Activated naive CD4-positive, alpha-beta T cell treated with anti-CD3 and anti-CD28 coated beads for 36 hours (primary cell): ENCODE measurements at regions of chr3 and their contacts with region 1.

Region 1: GRCh38 chr3:37210230-37210629 is 35.8 kb upstream of the LRRFIP2 start:
- DNase-seq: no peak
- H3K4me3 Mint-ChIP-seq: no peak overlapping the region
- H3K27ac Mint-ChIP-seq: no peak overlapping the region
- H3K4me1 Mint-ChIP-seq: peaks cover 2% of the 10 kb centered on the region
- H3K27me3 Mint-ChIP-seq: no peaks in the 10 kb centered on the region

Region 2: GRCh38 chr3:36904641-36905040 is 305.6 kb before region 1 on chr3:
- CTCF ChIA-PET with region 1: no interaction called
- intact Hi-C with region 1: loop called (anchors 1 kb)
- DNase-seq: no peak
- H3K4me3 Mint-ChIP-seq: no peak overlapping the region
- H3K27ac Mint-ChIP-seq: no peak overlapping the region
- H3K4me1 Mint-ChIP-seq: peaks cover 74% of the 10 kb centered on the region
- H3K27me3 Mint-ChIP-seq: no peaks in the 10 kb centered on the region

Region 3: DNA sequence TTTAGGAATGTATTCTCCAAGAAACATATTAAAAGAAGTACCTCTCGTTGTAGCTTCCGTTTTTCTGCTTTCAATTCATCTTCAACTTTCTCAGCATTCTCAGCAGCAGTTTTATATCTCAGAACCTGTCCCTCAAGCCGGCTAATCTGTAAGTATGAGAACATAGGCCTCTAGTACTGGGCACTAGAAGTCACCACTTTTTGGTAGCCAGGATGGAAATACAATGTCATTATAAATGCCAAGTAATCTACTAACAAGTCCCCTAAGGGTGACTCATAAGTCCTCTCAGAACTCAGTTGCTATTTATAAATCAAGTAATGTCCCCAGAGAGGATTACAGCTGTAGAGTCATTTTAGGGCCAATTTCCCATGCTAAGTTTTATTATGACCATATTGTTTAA is 155.9 kb before region 1 on chr3:
- CTCF ChIA-PET with region 1: interaction called, 5 read pairs
- intact Hi-C with region 1: loop called (anchors 10 kb)
- DNase-seq: no peak
- H3K4me3 Mint-ChIP-seq: no peak overlapping the region
- H3K27ac Mint-ChIP-seq: peak overlapping the region; percentile 66
- H3K4me1 Mint-ChIP-seq: peaks cover 13% of the 10 kb centered on the region
- H3K27me3 Mint-ChIP-seq: no peaks in the 10 kb centered on the region

Region 4: GRCh38 chr3:37174532-37175126 is 35.6 kb before region 1 on chr3 and contains the start of gene LRRFIP2:
- CTCF ChIA-PET with region 1: no interaction called
- intact Hi-C with region 1: loop called (anchors 1 kb)
- DNase-seq: peak; percentile 49
- H3K4me3 Mint-ChIP-seq: peak within 1 kb of the TSS; percentile 82
- H3K27ac Mint-ChIP-seq: peak within 1 kb of the TSS; percentile 50
- H3K4me1 Mint-ChIP-seq: peaks cover 43% of the 10 kb centered on the region
- H3K27me3 Mint-ChIP-seq: no peaks in the 10 kb centered on the region
- total RNA-seq, gene LRRFIP2: 13.3 to 15.3 TPM

Region 5: DNA sequence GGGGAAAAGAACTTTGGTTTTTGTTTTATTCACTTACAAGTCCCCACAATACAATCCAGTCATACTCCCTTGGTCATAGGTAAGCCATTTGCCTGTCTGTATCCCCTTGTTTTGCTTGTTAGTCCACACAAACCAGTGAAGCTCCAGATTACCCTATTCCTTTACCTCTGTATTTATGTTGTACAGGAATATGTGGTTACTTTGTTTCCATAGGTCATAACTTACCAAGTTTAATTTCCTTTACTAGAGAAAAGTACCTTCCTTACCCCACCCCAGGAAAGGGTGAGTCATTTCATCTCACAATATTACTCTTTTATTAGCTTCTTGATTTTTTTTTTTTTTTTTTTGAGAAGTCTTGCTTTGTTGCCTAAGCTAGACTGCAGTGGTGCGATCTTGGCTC is 77.5 kb after region 1 on chr3:
- CTCF ChIA-PET with region 1: no interaction called
- intact Hi-C with region 1: no loop called
- DNase-seq: peak; percentile 5
- H3K4me3 Mint-ChIP-seq: no peak overlapping the region
- H3K27ac Mint-ChIP-seq: peak overlapping the region; percentile 50
- H3K4me1 Mint-ChIP-seq: peaks cover 14% of the 10 kb centered on the region
- H3K27me3 Mint-ChIP-seq: no peaks in the 10 kb centered on the region

Region 6: DNA sequence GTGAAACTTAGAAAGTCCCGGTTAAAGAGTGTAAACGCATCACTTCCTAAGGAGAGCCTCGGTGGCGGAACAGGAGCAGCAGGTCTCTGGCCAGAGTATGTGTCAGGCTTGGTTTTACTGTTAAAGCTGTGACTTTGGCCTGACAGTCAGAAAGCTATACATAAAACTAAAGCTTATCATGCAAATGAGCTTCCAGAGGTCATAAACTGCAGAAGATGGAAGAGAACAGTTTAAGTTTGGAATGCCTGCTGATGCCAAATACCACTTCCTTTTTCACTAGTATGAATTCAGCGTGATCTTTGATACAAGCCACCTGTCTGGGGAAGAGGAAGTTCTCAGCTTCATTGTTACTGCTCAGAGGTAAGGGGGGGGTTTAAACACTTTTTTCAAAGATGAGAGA is 526.4 kb after region 1 on chr3:
- CTCF ChIA-PET with region 1: no interaction called
- intact Hi-C with region 1: no loop called
- DNase-seq: no peak
- H3K4me3 Mint-ChIP-seq: no peak overlapping the region
- H3K27ac Mint-ChIP-seq: no peak overlapping the region
- H3K4me1 Mint-ChIP-seq: no peaks in the 10 kb centered on the region
- H3K27me3 Mint-ChIP-seq: no peaks in the 10 kb centered on the region